ENCODE measurements at regions of chr4 and their contacts with region 1.

Region 1: GRCh38 chr4:158873795-158874401 is 105.1 kb downstream of the FNIP2 start:
- DNase-seq: no peak
- ATAC-seq: no peak
- H3K4me3 ChIP-seq: no peak overlapping the region
- H3K27ac ChIP-seq: peak overlapping the region in 1 of 2 donors; percentile 67
- H3K4me1 ChIP-seq: peaks cover 0 to 7% of the 10 kb centered on the region in 2 donors
- H3K27me3 ChIP-seq: no peaks in the 10 kb centered on the region

Region 2: DNA sequence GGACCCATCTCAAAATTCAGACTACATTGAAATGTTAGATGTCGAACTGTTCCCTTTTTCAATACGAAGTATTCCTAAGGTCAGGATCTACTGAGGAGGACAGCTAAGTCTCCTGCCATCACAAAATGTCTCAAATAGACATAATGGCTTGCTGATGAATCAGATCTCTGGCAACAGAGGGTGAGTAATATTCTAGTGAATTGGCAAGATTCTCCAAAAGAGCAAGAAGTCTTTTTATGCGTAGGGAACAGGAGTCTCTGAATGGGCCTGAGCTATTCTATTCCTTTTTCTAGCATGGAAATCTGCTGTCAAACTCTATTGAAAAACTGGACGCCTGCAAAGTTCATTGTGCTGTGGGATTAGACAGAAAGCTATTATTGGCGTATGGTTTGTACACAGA is 40.3 kb after region 1 on chr4:
- intact Hi-C with region 1: loop called in 1 of 2 experiments (anchors 5 kb)
- DNase-seq: no peak
- ATAC-seq: peak; percentile 80
- H3K4me3 ChIP-seq: no peak overlapping the region
- H3K27ac ChIP-seq: peak overlapping the region in 1 of 2 donors; percentile 93
- H3K4me1 ChIP-seq: peaks cover 4 to 6% of the 10 kb centered on the region in 2 donors
- H3K27me3 ChIP-seq: no peaks in the 10 kb centered on the region

Region 3: DNA sequence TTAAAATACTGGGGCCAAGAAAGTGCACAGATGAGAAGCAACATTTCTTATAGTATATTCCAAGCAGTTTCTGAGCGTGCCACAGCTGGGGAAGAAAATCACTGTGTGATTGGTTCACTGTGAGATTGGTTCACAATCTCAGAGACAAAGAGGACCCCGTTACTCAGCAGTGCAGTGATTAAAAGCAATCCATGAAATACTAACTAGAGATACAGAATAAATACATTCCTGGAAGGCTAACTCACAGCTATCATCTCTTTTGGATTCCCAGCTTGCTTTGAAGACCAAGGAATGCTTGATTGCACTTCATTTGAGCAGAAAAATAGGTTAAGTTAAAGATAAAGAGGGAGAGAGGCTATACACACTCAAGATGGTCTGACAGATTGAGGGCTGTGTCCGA is 96.9 kb after region 1 on chr4:
- intact Hi-C with region 1: no loop called
- DNase-seq: no peak
- ATAC-seq: no peak
- H3K4me3 ChIP-seq: no peak overlapping the region
- H3K27ac ChIP-seq: no peak overlapping the region
- H3K4me1 ChIP-seq: no peaks in the 10 kb centered on the region
- H3K27me3 ChIP-seq: no peaks in the 10 kb centered on the region

Region 4: DNA sequence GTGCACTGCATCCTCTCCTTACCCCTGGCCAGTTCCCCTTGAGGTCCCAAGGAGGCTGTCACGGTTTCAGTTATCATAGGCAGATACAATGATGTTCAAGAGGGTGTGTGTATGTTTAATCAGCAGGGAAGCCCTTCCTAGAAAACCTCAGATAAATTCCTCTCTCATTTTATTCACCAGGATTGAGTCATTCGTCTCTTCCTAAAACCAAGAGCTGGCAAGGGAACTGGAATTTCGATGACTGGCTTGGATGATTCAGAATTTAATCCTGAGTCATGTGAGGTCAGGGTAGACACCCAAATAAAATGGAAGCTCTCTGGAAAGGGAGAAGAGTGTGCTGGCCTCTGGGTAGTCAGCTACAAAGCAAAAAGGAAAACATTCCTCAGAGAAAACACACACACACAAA is 122.8 kb after region 1 on chr4:
- intact Hi-C with region 1: loop called in 1 of 2 experiments (anchors 10 kb)
- DNase-seq: no peak
- ATAC-seq: peak; percentile 74
- H3K4me3 ChIP-seq: no peak overlapping the region
- H3K27ac ChIP-seq: no peak overlapping the region
- H3K4me1 ChIP-seq: no peaks in the 10 kb centered on the region
- H3K27me3 ChIP-seq: no peaks in the 10 kb centered on the region

Region 5: DNA sequence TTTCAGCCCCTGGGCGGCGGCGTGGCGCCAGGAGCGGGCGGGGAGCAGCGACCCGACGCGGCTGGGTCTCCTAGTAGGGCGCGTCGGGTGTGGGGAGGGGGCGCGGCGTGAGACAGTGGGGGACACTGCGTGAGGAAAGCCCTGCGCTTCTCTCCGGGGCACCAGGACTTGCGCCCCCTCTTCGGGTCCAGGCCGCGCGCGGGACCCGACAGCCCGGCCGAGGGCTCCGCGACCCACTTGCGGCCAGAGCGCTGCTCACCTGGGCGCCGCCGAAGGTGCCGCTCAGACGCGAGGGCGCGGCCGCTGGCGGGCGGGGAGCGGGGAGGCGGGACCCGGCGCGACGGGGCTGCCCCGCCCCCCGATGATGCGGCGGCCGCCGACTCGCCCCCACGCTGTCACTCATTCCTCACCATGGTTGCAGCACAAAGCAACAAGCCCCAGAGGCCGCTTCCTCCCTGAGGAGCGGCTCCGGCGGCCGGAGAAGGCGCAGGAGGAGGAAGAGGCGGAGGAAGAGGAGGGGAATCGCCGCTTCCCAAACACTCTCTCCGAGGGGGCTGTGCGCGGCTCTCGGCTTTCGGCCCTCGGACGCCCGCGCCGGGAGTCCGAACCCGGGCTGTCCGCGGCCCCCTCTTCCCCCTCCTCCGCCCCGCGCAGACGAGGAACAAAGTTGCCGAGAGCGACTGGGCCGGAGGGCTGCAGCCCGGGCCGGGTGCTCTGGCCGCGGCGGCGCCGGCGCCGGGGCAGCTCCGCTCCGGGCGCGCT is 228.9 kb after region 1 on chr4 and contains the start of gene RAPGEF2:
- intact Hi-C with region 1: loop called (anchors 10 kb)
- DNase-seq: peak; percentile 96
- ATAC-seq: peak; percentile 95
- H3K4me3 ChIP-seq: peak within 1 kb of the TSS; percentile 99 to 100
- H3K27ac ChIP-seq: peak within 1 kb of the TSS; percentile 85 to 99
- H3K4me1 ChIP-seq: peaks cover 0 to 4% of the 10 kb centered on the region in 2 donors
- H3K27me3 ChIP-seq: no peaks in the 10 kb centered on the region
- total RNA-seq, gene RAPGEF2: 47.6 to 51.3 TPM

Measured in aorta (tissue), 5 donors.